ENCODE measurements at regions of chr6 and their contacts with region 1.

Region 1: GRCh38 chr6:33840048-33840926 is 36.5 kb upstream of the MLN start:
- DNase-seq: peak; percentile 68
- H3K4me3 Mint-ChIP-seq: no peak overlapping the region
- H3K27ac Mint-ChIP-seq: peak overlapping the region; percentile 32
- H3K4me1 Mint-ChIP-seq: peaks cover 24% of the 10 kb centered on the region
- H3K27me3 Mint-ChIP-seq: peaks cover 20% of the 10 kb centered on the region

Region 2: GRCh38 chr6:33788694-33789549 is 51.4 kb before region 1 on chr6 and contains the start of gene LEMD2:
- CTCF ChIA-PET with region 1: no interaction called
- POLR2A ChIA-PET with region 1: interaction called, 12 read pairs
- DNase-seq: peak; percentile 93
- H3K4me3 Mint-ChIP-seq: peak within 1 kb of the TSS; percentile 96
- H3K27ac Mint-ChIP-seq: peak within 1 kb of the TSS; percentile 98
- H3K4me1 Mint-ChIP-seq: peaks cover 49% of the 10 kb centered on the region
- H3K27me3 Mint-ChIP-seq: peaks cover 19% of the 10 kb centered on the region
- total RNA-seq, gene LEMD2: 70.6 to 76.1 TPM

Region 3: GRCh38 chr6:33896391-33897183 is 56.3 kb after region 1 on chr6:
- CTCF ChIA-PET with region 1: no interaction called
- POLR2A ChIA-PET with region 1: no interaction called
- DNase-seq: no peak
- H3K4me3 Mint-ChIP-seq: no peak overlapping the region
- H3K27ac Mint-ChIP-seq: no peak overlapping the region
- H3K4me1 Mint-ChIP-seq: peaks cover 45% of the 10 kb centered on the region
- H3K27me3 Mint-ChIP-seq: peaks cover 12% of the 10 kb centered on the region

Region 4: DNA sequence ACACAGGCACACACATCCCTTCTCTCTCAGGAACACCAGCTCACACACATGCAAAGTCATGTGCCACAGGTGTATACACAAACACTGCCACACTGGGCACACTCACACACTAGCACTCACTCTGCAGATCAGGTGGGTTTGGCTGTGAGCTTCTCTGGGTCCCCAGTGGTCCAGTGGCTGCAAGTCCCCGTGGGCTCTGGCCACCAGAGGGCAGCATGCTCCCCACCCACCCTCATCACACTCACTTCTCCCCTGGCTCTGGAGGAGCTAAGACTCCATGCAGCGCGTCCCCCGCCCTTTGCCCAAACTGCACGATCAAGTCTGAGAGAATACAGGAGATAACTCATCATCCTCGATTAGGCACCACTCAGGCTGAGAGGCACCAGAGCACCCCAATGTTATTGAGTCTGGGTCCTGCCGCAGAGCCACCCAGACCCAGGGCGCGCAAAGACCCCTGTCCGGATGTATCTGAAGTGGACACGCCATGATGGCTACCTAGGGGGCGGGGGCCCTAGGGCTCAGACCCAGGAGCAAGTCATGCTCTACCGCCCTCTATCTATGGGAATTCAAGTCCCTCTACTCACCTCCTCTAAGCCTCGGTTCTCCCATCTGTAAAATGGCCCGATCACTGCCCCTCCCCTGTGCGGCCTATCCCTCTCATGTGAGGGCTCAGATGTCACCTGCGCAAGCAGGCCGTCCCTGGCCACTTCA is 215.1 kb after region 1 on chr6:
- CTCF ChIA-PET with region 1: no interaction called
- POLR2A ChIA-PET with region 1: no interaction called
- DNase-seq: peak; percentile 58
- H3K4me3 Mint-ChIP-seq: no peak overlapping the region
- H3K27ac Mint-ChIP-seq: no peak overlapping the region
- H3K4me1 Mint-ChIP-seq: no peaks in the 10 kb centered on the region
- H3K27me3 Mint-ChIP-seq: peaks cover 3% of the 10 kb centered on the region